A673 (cell line): ENCODE measurements at regions of chr4 and their contacts with region 1.

Region 1: GRCh38 chr4:2526559-2526958 is 9.9 kb upstream of the FAM193A start:
- DNase-seq: no peak
- H3K4me3 ChIP-seq: no peak overlapping the region
- H3K27ac ChIP-seq: no peak overlapping the region
- H3K4me1 ChIP-seq: no peaks in the 10 kb centered on the region
- H3K27me3 ChIP-seq: no peaks in the 10 kb centered on the region
- CTCF ChIP-seq: 0 out of 2 replicates have a peak, but pooled peaks have one; percentile 11

Region 2: GRCh38 chr4:2241410-2242353 is 284.9 kb before region 1 on chr4 and contains the starts of genes HAUS3 and POLN:
- CTCF ChIA-PET with region 1: no interaction called
- POLR2A ChIA-PET with region 1: no interaction called
- intact Hi-C with region 1: loop called (anchors 10 kb)
- DNase-seq: peak; percentile 98
- H3K4me3 ChIP-seq: peak within 1 kb of the TSS; percentile 95
- H3K27ac ChIP-seq: peak within 1 kb of the TSS; percentile 81
- H3K4me1 ChIP-seq: peaks cover 33% of the 10 kb centered on the region
- H3K27me3 ChIP-seq: no peaks in the 10 kb centered on the region
- CTCF ChIP-seq: no peak
- total RNA-seq, gene HAUS3: 25.6 and 27.7 TPM in 2 replicates
- total RNA-seq, gene POLN: 2.5 and 4.0 TPM in 2 replicates